ENCODE measurements at regions of chr1 and their contacts with region 1.

Region 1: DNA sequence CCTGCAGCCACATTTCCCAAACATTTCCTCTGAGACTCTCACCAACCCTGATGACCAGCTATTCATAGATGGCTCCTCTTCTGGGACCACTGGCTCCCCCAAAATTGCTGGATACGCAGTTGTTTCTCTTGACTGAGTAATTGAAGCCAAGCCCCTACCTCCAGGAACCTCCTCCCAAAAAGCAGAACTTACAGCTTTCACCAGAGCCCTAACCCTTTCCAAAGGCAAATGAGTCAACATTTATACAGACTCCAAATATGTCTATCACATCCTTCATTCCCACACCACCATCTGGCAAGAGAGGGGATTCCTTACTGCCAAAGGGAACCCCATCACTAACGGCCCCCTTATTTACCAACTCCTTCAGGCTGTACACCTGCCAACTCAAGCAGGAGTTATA is 20.3 kb upstream of the CA6 start:
- DNase-seq: no peak
- ATAC-seq: no peak
- H3K4me3 ChIP-seq: no peak overlapping the region
- H3K27ac ChIP-seq: no peak overlapping the region
- H3K4me1 ChIP-seq: no peaks in the 10 kb centered on the region
- H3K27me3 ChIP-seq: no peaks in the 10 kb centered on the region
- CTCF ChIP-seq: no peak
- POLR2A ChIP-seq: no peak

Region 2: DNA sequence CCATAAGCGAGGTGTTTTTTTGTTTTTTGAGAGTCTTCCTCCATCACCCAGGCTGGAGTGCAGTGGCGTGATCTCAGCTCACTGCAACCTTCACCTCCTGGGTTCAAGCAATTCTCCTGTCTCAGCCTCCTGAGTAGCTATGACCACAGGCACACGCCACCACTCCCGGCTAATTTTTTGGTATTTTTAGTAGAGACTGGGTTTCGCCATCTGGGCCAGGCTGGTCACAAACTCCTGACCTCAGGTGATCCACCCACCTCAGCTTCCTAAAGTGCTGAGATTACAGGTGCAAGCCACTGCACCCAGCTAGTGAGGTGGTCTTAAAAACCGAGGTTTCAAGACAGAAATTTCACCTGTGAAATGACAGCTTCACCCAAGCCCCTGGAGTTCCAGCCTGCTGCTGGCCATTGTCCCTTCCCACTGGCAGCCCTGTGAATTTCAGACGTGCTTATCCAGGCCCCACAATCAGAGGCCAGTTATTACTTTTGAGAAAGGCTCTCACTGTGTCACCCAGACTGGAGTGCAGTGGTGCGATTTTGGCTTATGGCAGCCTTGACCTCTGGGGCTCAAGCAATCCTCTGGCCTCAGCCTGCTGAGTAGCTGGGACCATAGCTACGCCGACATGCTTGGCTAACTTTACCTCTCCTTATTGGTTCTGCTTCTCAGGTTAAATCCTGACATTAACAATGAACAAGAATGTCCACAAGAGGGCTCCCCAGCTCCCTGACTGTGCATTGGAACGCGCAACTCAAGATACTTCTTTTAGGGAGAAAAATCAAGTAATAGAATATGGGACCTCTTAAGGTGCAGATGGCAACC is 66.3 kb before region 1 on chr1:
- intact Hi-C with region 1: no loop called
- DNase-seq: no peak
- ATAC-seq: peak in 3 of 4 donors; percentile 17 to 35 (median 26)
- H3K4me3 ChIP-seq: no peak overlapping the region
- H3K27ac ChIP-seq: peak overlapping the region in 10 of 12 donors; percentile 6 to 64 (median 43)
- H3K4me1 ChIP-seq: peaks cover 0 to 29% (median 22%) of the 10 kb centered on the region in 12 donors
- H3K27me3 ChIP-seq: no peaks in the 10 kb centered on the region
- CTCF ChIP-seq: peak; percentile 41 to 79 (median 61)
- POLR2A ChIP-seq: no peak

Region 3: DNA sequence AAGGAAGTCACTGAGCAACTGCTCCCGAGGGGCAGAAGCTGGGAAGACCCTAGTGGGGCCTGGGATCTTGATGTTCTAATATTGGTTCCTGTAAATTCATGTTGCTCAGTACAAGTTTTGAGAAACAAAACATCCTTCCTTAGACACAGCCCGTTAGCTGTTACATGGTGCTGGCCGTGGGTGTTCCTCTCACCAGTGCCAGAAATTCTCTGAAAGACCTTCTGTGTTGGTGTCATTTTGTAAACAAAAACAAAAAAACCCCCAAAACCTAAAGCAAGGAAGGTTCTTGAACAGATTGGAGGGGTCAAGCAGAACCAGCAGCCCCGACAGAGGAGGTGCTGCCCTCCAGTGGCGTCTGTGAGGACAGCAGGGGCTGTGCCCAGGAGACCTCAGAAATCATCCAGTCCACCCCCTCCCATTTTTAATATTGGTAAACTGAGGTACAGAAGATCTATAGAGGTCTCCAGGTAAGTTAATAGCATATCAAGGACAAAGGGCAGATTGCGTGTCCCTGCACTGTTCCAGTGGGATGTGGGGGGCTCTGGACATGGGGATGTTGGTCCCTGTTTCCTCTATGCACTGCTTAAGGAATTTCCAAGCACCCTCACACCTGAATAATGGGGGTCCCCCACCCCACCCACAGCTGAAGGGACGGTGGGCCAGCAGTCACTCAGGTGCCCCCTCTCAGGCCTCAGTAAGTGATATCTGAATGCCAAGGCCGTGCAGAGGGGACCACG is 62.6 kb after region 1 on chr1:
- intact Hi-C with region 1: loop called in 1 of 10 experiments (anchors 2 kb)
- DNase-seq: peak in 4 of 5 donors; percentile 36 to 52 (median 48)
- ATAC-seq: peak in 3 of 4 donors; percentile 50 to 58 (median 56)
- H3K4me3 ChIP-seq: no peak overlapping the region
- H3K27ac ChIP-seq: peak overlapping the region in 1 of 12 donors; percentile 12
- H3K4me1 ChIP-seq: peaks cover 0 to 25% (median 8%) of the 10 kb centered on the region in 12 donors
- H3K27me3 ChIP-seq: no peaks in the 10 kb centered on the region
- CTCF ChIP-seq: peak; percentile 85 to 97 (median 93)
- POLR2A ChIP-seq: no peak

Region 4: DNA sequence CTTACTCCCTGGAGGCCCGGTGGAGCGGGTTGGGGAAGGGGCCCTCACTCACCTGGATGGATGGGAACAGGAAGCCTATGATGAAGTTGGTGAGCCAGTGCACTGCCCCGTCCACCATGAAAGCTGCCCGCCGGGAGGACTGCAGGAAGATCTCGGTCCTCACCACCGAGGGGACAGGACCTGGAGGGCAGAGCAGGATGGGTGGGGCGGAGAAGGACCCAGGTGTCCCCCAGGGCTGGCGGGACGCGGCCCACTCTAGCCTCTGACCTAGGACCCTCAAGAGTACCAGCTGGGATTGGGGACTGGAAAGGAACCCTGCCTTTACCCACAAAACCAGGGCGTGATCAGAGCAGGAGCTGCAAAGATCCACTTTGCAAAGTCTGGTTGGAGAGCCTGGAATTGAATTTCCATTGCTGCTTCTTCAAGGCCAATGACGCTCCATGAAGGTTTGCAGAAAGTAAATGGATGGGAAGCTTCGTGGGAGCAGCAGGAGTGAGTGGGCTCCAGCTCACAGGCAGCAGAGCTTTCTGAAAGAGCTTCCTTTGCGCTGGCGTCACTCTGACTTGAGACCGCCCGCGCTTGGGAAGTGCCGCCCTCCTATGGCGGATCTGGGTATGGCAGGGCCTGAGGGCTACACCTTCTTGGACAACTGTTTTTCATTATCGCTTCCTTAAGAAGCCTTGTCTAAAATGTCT is 79.4 kb after region 1 on chr1:
- intact Hi-C with region 1: loop called in 1 of 10 experiments (anchors 5 kb)
- DNase-seq: peak; percentile 62 to 84 (median 75)
- ATAC-seq: peak; percentile 46 to 92 (median 82)
- H3K4me3 ChIP-seq: no peak overlapping the region
- H3K27ac ChIP-seq: no peak overlapping the region
- H3K4me1 ChIP-seq: peaks cover 0 to 8% (median 0%) of the 10 kb centered on the region in 12 donors
- H3K27me3 ChIP-seq: no peaks in the 10 kb centered on the region
- CTCF ChIP-seq: peak; percentile 90 to 97 (median 93)
- POLR2A ChIP-seq: no peak

Region 5: DNA sequence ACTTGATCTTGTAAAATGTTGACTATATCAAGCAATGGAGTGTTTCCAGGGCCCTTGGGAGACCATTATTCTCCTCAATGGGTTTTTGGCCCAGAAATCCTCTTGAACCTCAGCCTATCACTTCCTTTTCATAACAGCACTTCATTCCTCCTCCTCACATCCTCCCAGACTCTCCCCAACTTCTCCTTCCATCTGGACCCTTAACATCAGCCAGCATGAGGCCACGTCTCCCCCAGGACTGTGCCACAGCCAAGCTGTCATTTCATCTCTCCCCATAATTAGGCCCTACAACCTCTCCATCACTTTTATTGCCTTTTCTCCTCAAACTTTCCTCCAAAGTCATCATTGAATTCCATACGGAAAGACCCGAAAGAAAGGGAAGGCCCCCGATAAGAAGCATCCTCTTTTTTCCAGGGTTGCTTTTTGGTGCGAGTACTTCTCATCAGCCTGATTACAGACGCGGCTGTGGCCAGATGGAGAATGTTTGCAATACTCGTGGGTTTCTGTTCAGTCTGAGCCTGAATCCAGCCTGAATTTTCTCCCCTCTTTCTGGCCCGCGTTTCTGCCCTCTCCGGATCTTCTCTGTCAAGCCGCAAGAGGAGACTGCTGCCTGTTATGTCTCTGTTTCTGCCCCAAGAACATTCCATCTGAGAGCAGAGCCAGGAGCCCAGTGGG is 561.2 kb after region 1 on chr1:
- intact Hi-C with region 1: loop called in 2 of 10 experiments (anchors 10 kb)
- DNase-seq: no peak
- ATAC-seq: no peak
- H3K4me3 ChIP-seq: no peak overlapping the region
- H3K27ac ChIP-seq: peak overlapping the region in 2 of 12 donors; percentile 4 to 50
- H3K4me1 ChIP-seq: peaks cover 0 to 3% (median 0%) of the 10 kb centered on the region in 12 donors
- H3K27me3 ChIP-seq: no peaks in the 10 kb centered on the region
- CTCF ChIP-seq: no peak
- POLR2A ChIP-seq: no peak